ENCODE measurements at regions of chr6 and their contacts with region 1.

Region 1: DNA sequence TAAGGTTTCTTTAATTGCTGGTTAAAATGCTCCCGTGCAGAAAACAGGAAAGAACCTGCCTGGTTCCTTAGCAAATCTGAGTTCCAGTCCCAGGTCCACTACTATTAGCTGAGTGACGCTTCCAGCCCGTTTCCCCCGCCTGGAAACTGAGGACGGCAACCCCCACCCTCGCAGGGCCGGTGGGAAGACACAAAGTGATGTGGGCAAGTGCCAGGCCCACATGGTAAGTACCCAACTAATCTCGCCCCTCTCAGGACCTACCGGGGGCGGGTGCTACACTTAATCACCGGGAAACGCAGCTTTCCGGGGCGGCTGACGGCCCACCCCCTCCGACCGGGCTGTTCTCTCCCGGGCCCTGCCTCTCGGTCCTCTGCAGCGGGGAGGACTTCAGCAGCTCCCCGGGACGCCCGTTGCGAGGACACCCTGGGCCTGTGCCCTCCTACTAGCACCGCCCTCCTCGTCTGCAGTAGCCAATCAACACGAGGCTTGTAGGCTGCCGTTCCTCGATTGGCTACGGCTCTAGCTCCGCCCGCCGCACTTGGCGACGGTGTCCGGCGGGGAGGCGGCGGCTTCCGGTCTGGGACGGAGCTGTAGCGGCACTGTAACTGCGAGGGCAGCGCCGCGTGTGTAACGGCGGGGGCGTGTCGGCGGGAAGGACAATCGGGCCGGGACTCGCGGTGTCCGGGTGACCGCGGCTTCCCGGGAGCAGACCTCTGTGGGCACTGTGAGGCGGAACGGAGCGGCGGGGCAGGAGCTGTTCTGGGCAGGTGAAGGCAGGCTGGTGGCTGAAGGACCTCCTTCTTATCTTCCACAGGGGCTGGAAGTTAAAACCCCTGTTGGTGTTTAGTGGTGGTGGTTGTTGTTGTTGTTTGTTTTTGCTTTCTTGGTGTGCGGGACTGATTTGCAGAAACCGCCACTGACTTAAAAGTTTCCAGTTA is at the start of gene ZBTB9:
- DNase-seq: peak; percentile 95
- H3K4me3 Mint-ChIP-seq: peak within 1 kb of the TSS; percentile 89
- H3K27ac Mint-ChIP-seq: peak within 1 kb of the TSS; percentile 72
- H3K4me1 Mint-ChIP-seq: peaks cover 22% of the 10 kb centered on the region
- H3K27me3 Mint-ChIP-seq: no peaks in the 10 kb centered on the region
- CTCF ChIP-seq: no peak
- total RNA-seq, gene ZBTB9: 7.5 and 8.3 TPM in 2 replicates

Region 2: DNA sequence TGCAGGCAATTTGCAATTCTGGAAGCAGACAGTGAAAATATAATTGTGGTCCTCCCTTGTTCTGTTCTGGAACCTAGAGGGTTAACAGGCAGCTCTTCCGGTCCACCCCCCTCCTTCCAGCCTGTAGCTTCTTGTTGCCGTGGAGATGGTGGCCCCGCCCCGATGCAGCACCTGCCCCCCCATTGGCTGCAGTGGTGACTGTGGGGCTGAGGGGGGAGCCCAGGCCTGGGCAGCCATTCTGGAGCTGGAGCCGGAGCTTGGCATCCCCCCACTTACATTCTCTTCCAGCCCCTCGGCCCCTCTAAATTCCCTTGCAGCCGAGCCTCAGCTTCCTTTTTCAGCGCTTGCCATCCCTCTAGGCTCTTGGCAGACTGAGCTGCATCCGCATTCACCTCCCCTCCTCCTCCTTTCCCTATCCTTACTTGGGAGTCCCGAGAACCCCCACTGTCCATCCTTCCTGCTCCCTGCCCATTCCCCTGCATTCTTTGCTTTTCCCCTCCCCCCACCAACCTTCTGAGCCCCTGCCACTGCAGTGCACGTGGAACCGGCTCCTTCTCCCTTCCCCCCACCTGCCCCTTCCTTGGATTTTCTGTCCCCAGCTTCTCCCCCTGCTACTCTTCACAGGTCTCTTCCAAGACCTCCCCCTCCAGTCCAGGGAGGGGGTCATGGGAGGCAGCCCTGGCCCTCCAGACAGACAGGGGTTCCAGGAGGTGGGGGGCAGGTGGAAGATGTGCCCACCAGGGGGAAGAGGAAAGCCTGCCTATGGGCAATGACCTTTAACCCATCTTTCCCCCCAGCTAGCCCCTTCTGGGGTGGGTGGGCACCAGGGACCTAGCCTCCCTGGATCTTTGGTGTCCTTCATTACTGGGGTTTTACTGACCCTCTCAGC is 23.0 kb before region 1 on chr6:
- CTCF ChIA-PET with region 1: interaction called, 4 read pairs
- POLR2A ChIA-PET with region 1: interaction called, 23 read pairs
- intact Hi-C with region 1: no loop called
- DNase-seq: no peak
- H3K4me3 Mint-ChIP-seq: no peak overlapping the region
- H3K27ac Mint-ChIP-seq: no peak overlapping the region
- H3K4me1 Mint-ChIP-seq: peaks cover 46% of the 10 kb centered on the region
- H3K27me3 Mint-ChIP-seq: no peaks in the 10 kb centered on the region
- CTCF ChIP-seq: no peak